ENCODE measurements at regions of chr12 and their contacts with region 1.

Region 1: GRCh38 chr12:52582971-52583456 is 9.4 kb upstream of the KRT74 start:
- DNase-seq: peak; percentile 66
- H3K4me3 Mint-ChIP-seq: no peak overlapping the region
- H3K27ac Mint-ChIP-seq: no peak overlapping the region
- H3K4me1 Mint-ChIP-seq: peaks cover 18% of the 10 kb centered on the region
- H3K27me3 Mint-ChIP-seq: peaks cover 3% of the 10 kb centered on the region

Region 2: DNA sequence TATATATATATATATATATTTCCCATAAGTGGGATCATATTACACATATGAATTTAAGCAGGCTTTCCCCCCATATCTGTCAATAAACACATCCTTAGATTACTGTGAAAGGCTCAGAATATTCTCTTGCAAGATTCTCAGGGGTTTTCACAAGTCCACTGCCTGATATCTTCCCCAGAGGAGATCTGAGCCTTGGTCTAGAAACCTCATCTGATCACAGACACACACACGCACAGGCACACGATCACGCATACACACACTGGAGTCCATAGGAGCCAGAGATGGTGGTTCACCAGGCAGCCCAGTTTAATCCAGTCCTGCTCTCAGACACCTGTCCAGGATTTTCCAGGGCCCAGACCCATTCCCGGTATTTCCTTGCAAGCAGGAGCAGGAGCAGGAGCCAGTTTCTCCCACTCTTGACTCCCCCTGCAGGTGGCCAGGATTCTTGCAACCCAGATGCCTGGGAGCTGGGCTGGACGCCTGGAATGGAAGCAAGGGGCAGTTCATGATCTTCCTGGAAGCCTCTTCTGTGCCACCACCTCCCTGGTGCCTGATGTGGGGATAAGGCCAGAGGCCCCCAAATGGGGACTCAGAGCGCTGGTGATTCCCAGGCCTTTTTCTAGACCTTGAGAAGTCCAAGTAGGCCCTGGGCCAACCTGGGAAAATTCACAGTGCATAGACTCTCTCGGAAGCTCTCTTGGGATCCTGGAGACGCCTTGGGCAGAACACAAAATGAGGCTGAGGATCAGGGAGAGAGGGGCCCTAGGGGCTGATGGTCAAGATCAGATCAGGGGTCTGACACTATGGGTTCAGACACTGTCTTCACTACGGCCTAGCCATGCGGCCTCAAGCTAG is 282.3 kb after region 1 on chr12:
- CTCF ChIA-PET with region 1: interaction called, 100 read pairs
- POLR2A ChIA-PET with region 1: interaction called, 5 read pairs
- DNase-seq: no peak
- H3K4me3 Mint-ChIP-seq: no peak overlapping the region
- H3K27ac Mint-ChIP-seq: no peak overlapping the region
- H3K4me1 Mint-ChIP-seq: peaks cover 12% of the 10 kb centered on the region
- H3K27me3 Mint-ChIP-seq: no peaks in the 10 kb centered on the region

Region 3: GRCh38 chr12:52870351-52871290 is 287.6 kb after region 1 on chr12:
- CTCF ChIA-PET with region 1: interaction called, 134 read pairs
- POLR2A ChIA-PET with region 1: interaction called, 5 read pairs
- DNase-seq: peak; percentile 78
- H3K4me3 Mint-ChIP-seq: no peak overlapping the region
- H3K27ac Mint-ChIP-seq: no peak overlapping the region
- H3K4me1 Mint-ChIP-seq: peaks cover 43% of the 10 kb centered on the region
- H3K27me3 Mint-ChIP-seq: no peaks in the 10 kb centered on the region

Measured in activated CD4-positive, alpha-beta memory T cell treated with anti-CD3 and anti-CD28 coated beads, Interleukin-2, amount 10 ng/mL, durations not matched to agents 7 days and 5 days (primary cell).